Dorsolateral prefrontal cortex (tissue), 120 donors: ENCODE measurements at regions of chr5 and their contacts with region 1.

Region 1: DNA sequence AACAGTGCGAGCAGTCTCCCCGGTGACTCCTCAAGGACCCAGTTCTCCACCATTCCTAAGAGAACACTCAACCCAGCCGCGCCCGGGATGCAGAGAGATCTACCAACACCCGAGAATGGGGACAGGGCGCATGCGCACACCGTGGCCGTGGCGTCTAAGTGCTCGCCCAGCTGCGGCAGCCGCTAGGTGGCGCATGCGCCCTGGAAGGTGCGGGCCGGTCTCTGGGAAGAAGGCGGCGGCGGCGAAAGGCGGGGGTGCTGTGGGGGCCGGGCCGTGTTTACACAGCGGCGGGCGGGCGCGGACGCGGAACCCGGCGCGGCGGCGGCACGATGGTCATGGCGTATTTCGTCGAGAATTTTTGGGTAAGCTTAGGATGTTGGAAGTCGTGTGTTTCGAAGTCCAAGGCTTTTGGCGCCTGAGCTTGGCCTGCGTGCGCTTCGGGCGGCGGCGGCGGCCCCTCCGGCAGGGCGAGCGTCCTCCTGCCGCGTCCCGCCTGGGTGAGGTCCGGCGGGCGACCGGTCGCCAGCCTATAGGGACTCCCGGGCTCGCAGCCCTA is at the start of gene FCHO2:
- DNase-seq: peak; percentile 94 to 98 (median 96)
- H3K4me3 ChIP-seq: peak within 1 kb of the TSS; percentile 56 to 94 (median 81)
- H3K27ac ChIP-seq: peak within 1 kb of the TSS; percentile 71 to 99 (median 95)
- H3K27me3 ChIP-seq: no peaks in the 10 kb centered on the region
- CTCF ChIP-seq: peak; percentile 53 to 97 (median 82)
- total RNA-seq, gene FCHO2: 22.7 to 54.5 (median 35.3) TPM

Region 2: DNA sequence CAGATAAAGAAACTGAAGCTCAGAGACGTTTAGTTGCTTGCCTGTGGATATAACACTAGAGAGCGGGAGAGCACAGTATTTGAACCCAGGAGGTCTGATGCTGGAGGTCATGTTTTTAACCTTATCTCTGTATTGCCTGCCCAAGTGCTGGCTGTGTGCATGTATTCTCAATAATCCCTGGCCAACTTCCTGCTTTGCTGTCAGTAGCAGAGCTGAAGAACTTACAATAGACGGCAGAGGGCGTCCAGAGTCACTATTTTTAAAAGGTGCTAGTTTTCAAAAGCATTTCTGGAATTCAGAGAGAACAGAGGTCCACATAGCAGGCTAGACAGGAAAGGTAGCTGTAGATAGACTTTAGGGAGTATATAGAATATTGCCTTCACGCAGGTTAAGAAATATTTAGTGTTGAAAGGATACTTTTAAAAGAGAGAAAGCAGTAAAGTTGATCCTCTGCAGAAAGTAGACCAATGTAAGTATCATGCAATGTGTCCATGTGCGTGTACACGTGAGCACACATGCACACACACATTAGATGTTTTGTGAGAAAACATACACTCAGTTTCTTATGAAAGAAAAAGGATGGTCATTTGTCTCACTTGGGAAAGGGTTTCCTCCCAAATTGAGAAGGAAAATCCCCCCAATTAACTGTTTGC is 589.4 kb before region 1 on chr5:
- intact Hi-C with region 1: loop called in 1 of 2 experiments (anchors 10 kb)
- DNase-seq: peak in 5 of 10 donors; percentile 48 to 74 (median 54)
- H3K4me3 ChIP-seq: no peak overlapping the region
- H3K27ac ChIP-seq: no peak overlapping the region
- H3K27me3 ChIP-seq: no peaks in the 10 kb centered on the region
- CTCF ChIP-seq: peak; percentile 48 to 87 (median 74)

Region 3: GRCh38 chr5:72611118-72611730 is 344.6 kb before region 1 on chr5:
- intact Hi-C with region 1: loop called in 1 of 2 experiments (anchors 5 kb)
- DNase-seq: peak; percentile 71 to 91 (median 86)
- H3K4me3 ChIP-seq: peak overlapping the region in 50 of 59 donors; percentile 2 to 59 (median 27)
- H3K27ac ChIP-seq: peak overlapping the region in 56 of 59 donors; percentile 5 to 89 (median 72)
- H3K27me3 ChIP-seq: no peaks in the 10 kb centered on the region
- CTCF ChIP-seq: peak; percentile 82 to 98 (median 94)

Region 4: GRCh38 chr5:72816311-72817145 is 139.3 kb before region 1 on chr5 and contains the start of gene TNPO1:
- intact Hi-C with region 1: loop called (anchors 5 to 10 kb)
- DNase-seq: peak; percentile 79 to 94 (median 89)
- H3K4me3 ChIP-seq: peak within 1 kb of the TSS; percentile 61 to 97 (median 87)
- H3K27ac ChIP-seq: peak within 1 kb of the TSS; percentile 85 to 99 (median 97)
- H3K27me3 ChIP-seq: no peaks in the 10 kb centered on the region
- CTCF ChIP-seq: peak in 36 of 56 donors; percentile 4 to 70 (median 31)
- total RNA-seq, gene TNPO1: 61.1 to 127 (median 93.1) TPM

Region 5: DNA sequence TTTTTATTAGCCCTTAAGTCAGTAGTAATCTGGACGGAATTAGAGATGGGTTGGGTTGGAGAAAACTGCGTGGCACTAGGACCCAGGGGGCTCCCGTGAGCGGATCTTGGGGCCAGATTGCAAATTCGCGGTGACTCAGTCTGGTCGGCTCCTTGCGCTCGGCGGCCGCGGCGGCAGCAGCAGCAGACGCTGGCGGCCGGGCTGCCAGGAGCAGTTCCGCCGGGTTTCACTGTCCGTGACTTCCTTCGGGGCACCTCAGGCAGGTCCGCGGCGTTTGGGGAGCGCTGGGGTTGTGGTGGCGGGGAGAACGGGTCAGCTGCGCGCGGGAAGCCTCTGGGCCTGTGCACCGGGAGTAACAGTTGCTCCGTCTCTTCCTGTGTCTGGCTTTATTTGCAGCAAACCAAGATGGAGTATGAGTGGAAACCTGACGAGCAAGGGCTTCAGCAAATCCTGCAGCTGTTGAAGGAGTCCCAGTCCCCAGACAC is 107.8 kb before region 1 on chr5:
- intact Hi-C with region 1: loop called (anchors 2 to 10 kb)
- DNase-seq: peak; percentile 92 to 97 (median 94)
- H3K4me3 ChIP-seq: peak overlapping the region; percentile 52 to 90 (median 80)
- H3K27ac ChIP-seq: peak overlapping the region; percentile 82 to 97 (median 94)
- H3K27me3 ChIP-seq: no peaks in the 10 kb centered on the region
- CTCF ChIP-seq: peak in 38 of 56 donors; percentile 7 to 55 (median 31)

Region 6: DNA sequence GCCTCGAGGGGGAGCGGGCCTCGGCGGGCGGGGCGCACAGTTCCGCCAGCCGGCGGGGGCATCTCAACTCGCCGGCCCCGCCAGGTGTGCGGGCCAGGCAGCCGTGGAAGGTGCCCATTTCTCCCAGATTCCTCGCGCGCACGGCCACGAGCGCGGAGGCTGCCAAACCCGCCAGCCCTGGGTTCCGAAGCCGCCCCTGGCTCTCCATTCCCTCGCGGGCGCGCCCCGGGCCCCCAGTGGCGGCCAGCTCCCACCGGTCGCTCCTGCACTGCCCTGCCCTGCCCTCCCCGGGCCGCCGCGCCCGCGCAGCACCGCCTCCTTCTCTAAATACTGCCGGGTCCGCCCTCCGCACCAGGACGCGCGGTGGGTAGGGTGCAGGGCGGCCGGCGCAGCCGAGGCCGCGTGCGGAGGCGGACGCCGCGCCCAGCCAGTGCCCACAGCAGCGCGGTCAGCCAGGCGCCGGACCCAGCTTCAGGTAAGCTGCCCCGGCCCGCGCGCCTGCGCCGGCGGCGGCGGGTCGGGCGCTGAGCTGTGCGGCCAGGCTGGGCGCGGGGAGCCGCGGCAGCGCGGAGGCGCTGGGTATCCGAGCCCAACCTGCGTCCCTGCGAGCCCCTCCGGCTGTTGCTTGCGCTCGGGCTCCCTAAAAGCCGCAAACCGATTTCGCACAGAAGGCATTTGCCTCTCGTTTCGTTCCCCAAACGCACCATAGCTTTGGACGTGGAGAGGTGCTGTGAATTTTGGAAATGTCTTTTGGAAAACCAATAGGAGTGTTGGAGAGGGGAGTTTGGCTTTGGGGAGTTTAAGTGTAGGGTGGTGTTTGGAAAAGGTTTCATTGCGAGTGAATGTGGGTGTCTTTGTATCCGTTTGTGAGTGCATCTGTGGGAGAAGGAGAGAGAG is 164.6 kb after region 1 on chr5 and contains the start of gene TMEM171:
- intact Hi-C with region 1: loop called in 1 of 2 experiments (anchors 5 kb)
- DNase-seq: peak in 5 of 10 donors; percentile 30 to 60 (median 31)
- H3K4me3 ChIP-seq: peak within 1 kb of the TSS; percentile 41 to 81 (median 67)
- H3K27ac ChIP-seq: peak within 1 kb of the TSS in 53 of 59 donors; percentile 10 to 97 (median 84)
- H3K27me3 ChIP-seq: peaks cover 0 to 6% (median 0%) of the 10 kb centered on the region in 45 donors
- CTCF ChIP-seq: peak in 1 of 56 donors; percentile 9
- total RNA-seq, gene TMEM171: 0.39 to 6.5 (median 1.4) TPM in 111 of 120 experiments, not detected in the others

Region 7: GRCh38 chr5:73189871-73190376 is 234.1 kb after region 1 on chr5:
- intact Hi-C with region 1: no loop called
- DNase-seq: no peak
- H3K4me3 ChIP-seq: no peak overlapping the region
- H3K27ac ChIP-seq: peak overlapping the region in 1 of 59 donors; percentile 41
- H3K27me3 ChIP-seq: peaks cover 0 to 8% (median 0%) of the 10 kb centered on the region in 45 donors
- CTCF ChIP-seq: no peak

Region 8: DNA sequence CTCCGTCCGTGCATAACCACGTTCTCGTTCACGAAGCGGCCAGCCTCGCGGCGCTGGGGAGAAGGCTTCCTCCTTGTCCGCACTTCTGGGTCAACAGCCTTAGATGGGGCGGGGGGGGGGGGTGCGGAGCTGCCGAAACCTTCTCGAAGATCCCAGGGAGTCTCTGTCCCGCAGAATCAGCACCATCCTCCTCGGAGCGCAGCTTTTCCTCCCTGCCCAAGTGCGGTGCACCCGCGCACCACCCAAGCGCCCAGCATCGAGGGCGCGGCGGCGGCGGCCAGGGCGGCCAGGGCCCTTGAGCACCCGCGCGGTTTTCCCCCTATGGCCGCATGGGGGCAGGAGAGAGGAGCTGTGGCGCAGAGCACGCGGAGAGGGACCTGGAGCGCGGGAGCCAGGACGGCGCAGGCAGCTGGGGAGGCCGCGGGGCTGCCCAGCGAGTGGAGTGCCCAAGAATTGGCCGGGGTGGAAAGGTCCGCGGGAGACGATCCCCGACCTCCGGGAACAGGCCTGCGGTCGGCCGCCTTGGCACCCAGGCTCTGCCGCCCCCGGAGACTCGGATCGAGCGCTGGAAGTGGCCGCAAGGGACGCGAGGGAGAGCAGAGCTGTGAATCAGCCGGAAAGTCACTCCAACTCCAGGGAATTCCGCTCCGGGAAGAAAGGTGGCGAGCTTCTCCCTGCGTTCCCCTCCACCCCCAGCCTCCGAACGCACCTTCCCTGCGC is 260.2 kb after region 1 on chr5:
- intact Hi-C with region 1: loop called in 1 of 2 experiments (anchors 10 kb)
- DNase-seq: peak in 8 of 10 donors; percentile 42 to 80 (median 59)
- H3K4me3 ChIP-seq: peak overlapping the region in 58 of 59 donors; percentile 8 to 61 (median 48)
- H3K27ac ChIP-seq: peak overlapping the region in 5 of 59 donors; percentile 2 to 31 (median 22)
- H3K27me3 ChIP-seq: peaks cover 0 to 95% (median 69%) of the 10 kb centered on the region in 45 donors
- CTCF ChIP-seq: peak; percentile 44 to 94 (median 83)